SK-N-SH (cell line): ENCODE measurements at regions of chr2 and their contacts with region 1.

Region 1: GRCh38 chr2:119476301-119477021 is 44.8 kb downstream of the TMEM37 start:
- DNase-seq: peak; percentile 87
- H3K4me3 ChIP-seq: peak overlapping the region; percentile 23 to 42; a peak in 2 of 4 replicates
- H3K27ac ChIP-seq: no peak overlapping the region; a peak in 1 of 4 replicates
- H3K4me1 ChIP-seq: peaks cover 0 to 22% of the 10 kb centered on the region in 2 experiments; a peak in 1 of 4 replicates
- H3K27me3 ChIP-seq: no peaks in the 10 kb centered on the region
- CTCF ChIP-seq: peak; percentile 90
- EP300 ChIP-seq: no peak
- RAD21 ChIP-seq: peak; percentile 87

Region 2: GRCh38 chr2:119414894-119415293 is 61.6 kb before region 1 on chr2:
- CTCF ChIA-PET with region 1: interaction called, 95 read pairs
- POLR2A ChIA-PET with region 1: no interaction called
- DNase-seq: no peak
- H3K4me3 ChIP-seq: no peak overlapping the region
- H3K27ac ChIP-seq: no peak overlapping the region
- H3K4me1 ChIP-seq: no peaks in the 10 kb centered on the region
- H3K27me3 ChIP-seq: no peaks in the 10 kb centered on the region; the same call in 1 of the 2 replicates
- CTCF ChIP-seq: no peak
- EP300 ChIP-seq: no peak
- RAD21 ChIP-seq: no peak

Region 3: GRCh38 chr2:119431155-119431975 is 45.1 kb before region 1 on chr2 and contains the start of gene TMEM37:
- CTCF ChIA-PET with region 1: interaction called, 18 read pairs
- POLR2A ChIA-PET with region 1: no interaction called
- DNase-seq: peak; percentile 85
- H3K4me3 ChIP-seq: peak within 1 kb of the TSS; percentile 38 to 44
- H3K27ac ChIP-seq: no peak within 1 kb of the TSS
- H3K4me1 ChIP-seq: peaks cover 0 to 4% of the 10 kb centered on the region in 2 experiments; a peak in 2 of 4 replicates
- H3K27me3 ChIP-seq: peaks cover 12% of the 10 kb centered on the region; the same call in 1 of the 2 replicates
- CTCF ChIP-seq: no peak
- EP300 ChIP-seq: no peak
- RAD21 ChIP-seq: no peak
- polyA plus RNA-seq, gene TMEM37: 0.13 and 0.25 TPM in 2 replicates

Region 4: DNA sequence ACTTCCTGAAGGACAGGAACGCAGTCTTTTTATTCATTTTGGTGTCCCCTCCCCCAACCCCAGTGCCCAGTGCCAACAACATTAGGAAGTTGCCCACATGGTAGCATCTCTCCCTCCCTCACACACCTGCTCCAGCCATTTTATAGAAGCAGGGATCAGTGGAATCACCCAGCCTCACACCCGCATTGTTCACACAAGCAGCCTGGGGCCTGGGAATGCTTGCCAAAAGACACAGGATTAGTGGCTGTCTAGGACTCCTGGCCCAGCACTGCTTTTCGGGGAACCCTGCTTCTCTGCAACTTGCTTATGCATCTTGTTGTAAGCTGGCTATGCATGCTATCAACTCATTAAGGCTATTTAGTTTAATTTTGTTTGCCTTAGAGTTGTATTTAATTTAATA is 26.9 kb before region 1 on chr2:
- CTCF ChIA-PET with region 1: interaction called, 42 read pairs
- POLR2A ChIA-PET with region 1: no interaction called
- DNase-seq: peak; percentile 42
- H3K4me3 ChIP-seq: no peak overlapping the region
- H3K27ac ChIP-seq: no peak overlapping the region
- H3K4me1 ChIP-seq: peaks cover 0 to 14% of the 10 kb centered on the region in 2 experiments; a peak in 3 of 4 replicates
- H3K27me3 ChIP-seq: no peaks in the 10 kb centered on the region; the same call in 1 of the 2 replicates
- CTCF ChIP-seq: no peak
- EP300 ChIP-seq: no peak
- RAD21 ChIP-seq: no peak

Region 5: GRCh38 chr2:119491808-119492533 is 15.5 kb after region 1 on chr2:
- CTCF ChIA-PET with region 1: interaction called, 85 read pairs
- POLR2A ChIA-PET with region 1: no interaction called
- DNase-seq: no peak
- H3K4me3 ChIP-seq: no peak overlapping the region
- H3K27ac ChIP-seq: peak overlapping the region; percentile 6 to 14; a peak in 2 of 4 replicates
- H3K4me1 ChIP-seq: peaks cover 0 to 13% of the 10 kb centered on the region in 2 experiments; a peak in 1 of 4 replicates
- H3K27me3 ChIP-seq: 0 out of 2 replicates have a peak, but pooled peaks cover 7% of the 10 kb centered on the region
- CTCF ChIP-seq: no peak
- EP300 ChIP-seq: no peak
- RAD21 ChIP-seq: no peak

Region 6: GRCh38 chr2:119659601-119660342 is 183.3 kb after region 1 on chr2:
- CTCF ChIA-PET with region 1: interaction called, 12 read pairs
- POLR2A ChIA-PET with region 1: no interaction called
- DNase-seq: peak; percentile 51
- H3K4me3 ChIP-seq: no peak overlapping the region
- H3K27ac ChIP-seq: no peak overlapping the region
- H3K4me1 ChIP-seq: no peaks in the 10 kb centered on the region
- H3K27me3 ChIP-seq: no peaks in the 10 kb centered on the region
- CTCF ChIP-seq: peak; percentile 88
- EP300 ChIP-seq: no peak
- RAD21 ChIP-seq: peak; percentile 85